Common myeloid progenitor, CD34-positive (primary cell): ENCODE measurements at regions of chr3 and their contacts with region 1.

Region 1: DNA sequence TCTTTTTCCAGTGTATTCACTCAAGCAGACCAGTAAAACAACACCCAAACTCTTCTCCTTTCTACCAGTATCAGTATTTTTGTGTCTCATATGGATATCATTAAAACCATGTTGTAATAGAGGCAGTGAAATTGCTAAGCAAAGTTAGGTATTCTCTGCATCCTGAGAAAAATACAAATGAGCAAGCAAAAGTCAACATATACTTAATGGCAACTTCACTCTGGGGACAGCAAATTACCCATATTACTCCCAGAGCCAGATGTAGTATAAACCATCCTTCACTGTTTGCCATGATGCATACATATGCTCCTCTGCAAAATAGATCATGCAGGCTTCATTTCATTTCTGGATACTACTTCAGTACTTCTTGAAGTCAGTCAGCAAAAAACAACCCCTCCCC is 22.1 kb downstream of the UBA5 start:
- DNase-seq: no peak
- H3K4me3 ChIP-seq: no peak overlapping the region
- H3K27ac ChIP-seq: no peak overlapping the region
- H3K4me1 ChIP-seq: no peaks in the 10 kb centered on the region
- H3K27me3 ChIP-seq: no peaks in the 10 kb centered on the region

Region 2: GRCh38 chr3:132592216-132592615 is 90.0 kb before region 1 on chr3:
- CTCF ChIA-PET with region 1: no interaction called
- POLR2A ChIA-PET with region 1: no interaction called
- DNase-seq: no peak
- H3K4me3 ChIP-seq: no peak overlapping the region
- H3K27ac ChIP-seq: no peak overlapping the region
- H3K4me1 ChIP-seq: no peaks in the 10 kb centered on the region
- H3K27me3 ChIP-seq: no peaks in the 10 kb centered on the region

Region 3: DNA sequence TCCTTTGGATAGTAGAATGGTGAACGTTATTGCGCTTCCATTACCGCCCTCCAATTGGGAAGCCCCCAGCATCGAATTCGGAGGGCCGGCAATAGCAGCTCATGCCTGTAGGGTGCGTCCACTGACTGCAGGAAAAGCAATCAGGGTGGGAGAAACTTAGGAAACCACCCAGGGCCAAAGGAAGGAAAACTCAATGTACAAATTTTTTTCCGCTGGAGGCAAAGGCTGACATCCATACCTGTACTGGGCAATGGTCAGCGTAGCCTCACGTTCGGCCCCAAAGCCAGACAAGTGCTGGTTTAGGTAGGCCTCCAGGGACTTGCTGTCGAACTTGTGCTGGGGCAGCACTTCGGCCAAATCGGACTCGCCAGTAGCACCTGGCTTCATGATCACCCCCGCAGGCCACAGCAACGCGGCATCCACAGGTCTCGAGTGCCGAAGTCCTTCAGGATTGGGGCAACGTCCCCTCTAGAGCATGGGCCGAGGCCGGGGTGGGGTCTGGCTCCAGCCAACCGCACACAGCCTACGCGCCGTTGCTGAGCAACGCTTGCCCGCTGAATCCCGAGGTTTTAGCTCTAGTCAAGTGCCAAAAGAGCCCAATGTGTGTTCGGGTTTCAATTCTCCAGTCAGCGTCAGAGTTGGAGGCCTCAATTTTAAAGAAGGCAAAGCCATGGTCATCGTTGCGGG is 22.7 kb before region 1 on chr3 and contains the start of gene ACAD11:
- CTCF ChIA-PET with region 1: interaction called, 10 read pairs
- POLR2A ChIA-PET with region 1: no interaction called
- DNase-seq: peak; percentile 72 to 81 (median 73)
- H3K4me3 ChIP-seq: peak within 1 kb of the TSS; percentile 78 to 99 (median 98)
- H3K27ac ChIP-seq: peak within 1 kb of the TSS; percentile 81 to 92
- H3K4me1 ChIP-seq: peaks cover 3 to 28% (median 16%) of the 10 kb centered on the region in 4 experiments
- H3K27me3 ChIP-seq: no peaks in the 10 kb centered on the region

Region 4: GRCh38 chr3:133016838-133017309 is 334.7 kb after region 1 on chr3:
- CTCF ChIA-PET with region 1: no interaction called
- POLR2A ChIA-PET with region 1: no interaction called
- DNase-seq: peak; percentile 36 to 75 (median 58)
- H3K4me3 ChIP-seq: no peak overlapping the region
- H3K27ac ChIP-seq: no peak overlapping the region
- H3K4me1 ChIP-seq: peaks cover 0 to 4% (median 0%) of the 10 kb centered on the region in 4 experiments
- H3K27me3 ChIP-seq: no peaks in the 10 kb centered on the region

Region 5: GRCh38 chr3:133124511-133124910 is 442.3 kb after region 1 on chr3:
- CTCF ChIA-PET with region 1: no interaction called
- POLR2A ChIA-PET with region 1: no interaction called
- DNase-seq: peak; percentile 82 to 92 (median 84)
- H3K4me3 ChIP-seq: peak overlapping the region in 4 of 7 experiments; percentile 17 to 34 (median 31)
- H3K27ac ChIP-seq: peak overlapping the region in 1 of 2 experiments; percentile 27
- H3K4me1 ChIP-seq: peaks cover 0 to 18% (median 5%) of the 10 kb centered on the region in 4 experiments
- H3K27me3 ChIP-seq: no peaks in the 10 kb centered on the region